ENCODE measurements at regions of chr21 and their contacts with region 1.

Region 1: DNA sequence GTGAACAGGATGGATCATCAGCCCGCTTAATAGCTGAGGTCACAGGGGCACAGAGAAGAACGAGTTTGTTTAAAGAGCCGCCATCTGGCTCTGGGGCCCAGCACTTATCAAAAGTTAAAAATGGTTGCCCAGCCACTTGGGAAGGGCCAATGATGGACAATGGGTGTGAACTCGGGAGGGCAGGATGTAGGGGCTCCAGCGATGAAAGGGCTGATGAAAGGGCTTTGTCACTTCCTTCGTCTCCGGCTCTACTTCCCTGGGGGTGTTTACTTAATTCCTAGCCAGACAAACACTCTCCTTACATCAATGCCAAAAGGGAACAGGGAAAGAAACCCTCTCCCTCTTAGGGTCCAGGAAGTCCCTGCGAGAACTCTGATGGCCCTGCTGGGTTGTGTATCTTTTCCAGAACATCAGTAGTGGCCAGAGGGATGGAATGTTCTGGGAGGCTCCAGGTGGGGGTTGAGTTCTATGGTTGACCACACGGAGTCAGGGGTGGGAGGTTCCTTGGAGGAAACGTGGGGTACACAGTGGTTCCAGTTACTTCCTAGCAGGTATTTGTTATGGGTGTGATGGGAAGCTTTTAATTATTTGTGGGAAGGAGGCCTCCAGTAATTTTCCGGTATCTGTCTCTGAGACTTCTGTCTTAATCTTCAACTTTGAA is 9.0 kb upstream of the ABCG1 start:
- DNase-seq: peak in 1 of 2 donors; percentile 18
- H3K4me3 ChIP-seq: no peak overlapping the region
- H3K27ac ChIP-seq: no peak overlapping the region
- H3K4me1 ChIP-seq: no peaks in the 10 kb centered on the region
- H3K27me3 ChIP-seq: no peaks in the 10 kb centered on the region
- CTCF ChIP-seq: no peak

Region 2: GRCh38 chr21:42248783-42249597 is 39.0 kb after region 1 on chr21:
- intact Hi-C with region 1: loop called (anchors 5 kb)
- DNase-seq: no peak
- H3K4me3 ChIP-seq: no peak overlapping the region
- H3K27ac ChIP-seq: no peak overlapping the region
- H3K4me1 ChIP-seq: no peaks in the 10 kb centered on the region
- H3K27me3 ChIP-seq: no peaks in the 10 kb centered on the region
- CTCF ChIP-seq: no peak

Measured in ascending aorta (tissue), 2 donors.